ENCODE measurements at regions of chr11 and their contacts with region 1.

Region 1: GRCh38 chr11:72727521-72727920 is 24.7 kb downstream of the ARAP1 start:
- DNase-seq: no peak
- H3K4me3 ChIP-seq: no peak overlapping the region
- H3K27ac ChIP-seq: peak overlapping the region in 40 of 59 donors; percentile 1 to 75 (median 43)
- H3K27me3 ChIP-seq: no peaks in the 10 kb centered on the region
- CTCF ChIP-seq: no peak

Region 2: DNA sequence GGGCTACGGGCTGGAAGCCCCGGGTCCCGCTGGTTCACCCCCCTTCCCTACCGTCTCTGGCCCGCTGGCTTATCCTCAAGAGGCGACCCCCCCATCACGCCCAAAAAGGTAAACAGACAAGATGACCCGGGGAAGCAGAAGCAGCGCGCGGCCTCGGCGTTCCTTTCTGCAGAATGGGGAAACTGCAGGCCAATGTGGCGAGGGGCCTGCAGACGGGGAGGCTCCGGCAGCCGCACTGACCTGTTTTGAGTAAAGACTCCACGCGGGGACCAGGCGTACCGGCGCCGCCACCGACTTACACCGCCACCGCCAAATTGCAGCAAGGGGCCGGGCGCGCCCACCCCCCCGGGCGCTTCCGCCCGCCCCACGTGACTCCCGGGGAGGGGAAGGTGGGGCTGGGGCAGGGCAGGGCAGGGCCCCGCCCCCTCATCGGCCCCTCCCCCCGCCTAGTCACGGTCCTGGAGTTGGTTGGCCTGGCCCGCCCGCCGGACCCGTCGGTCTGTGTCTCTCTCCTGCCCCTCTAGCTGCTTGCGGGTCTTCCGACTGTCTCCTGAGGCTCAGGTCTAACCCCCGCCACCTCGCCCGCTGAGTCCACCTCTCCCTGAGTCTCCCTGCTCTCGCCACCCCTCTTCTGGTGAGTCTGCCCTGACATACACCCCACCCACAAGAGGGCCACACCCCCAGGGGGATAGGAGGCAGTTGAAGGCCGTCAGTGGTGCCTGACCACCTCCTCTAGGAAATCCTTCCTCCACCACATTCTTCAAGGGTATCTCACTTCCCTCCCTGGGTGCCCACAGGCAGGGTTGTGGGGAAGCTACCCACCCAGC is 24.8 kb after region 1 on chr11 and contains the start of gene ARAP1:
- intact Hi-C with region 1: loop called in 1 of 2 experiments (anchors 2 kb)
- DNase-seq: peak in 7 of 10 donors; percentile 39 to 76 (median 64)
- H3K4me3 ChIP-seq: peak within 1 kb of the TSS; percentile 59 to 95 (median 73)
- H3K27ac ChIP-seq: peak within 1 kb of the TSS in 57 of 59 donors; percentile 34 to 93 (median 86)
- H3K27me3 ChIP-seq: no peaks in the 10 kb centered on the region
- CTCF ChIP-seq: peak in 14 of 56 donors; percentile 6 to 37 (median 20)
- total RNA-seq, gene ARAP1: 42.2 to 126 (median 68.6) TPM

Region 3: GRCh38 chr11:72762641-72763304 is 35.3 kb after region 1 on chr11:
- intact Hi-C with region 1: no loop called
- DNase-seq: no peak
- H3K4me3 ChIP-seq: no peak overlapping the region
- H3K27ac ChIP-seq: no peak overlapping the region
- H3K27me3 ChIP-seq: no peaks in the 10 kb centered on the region
- CTCF ChIP-seq: no peak